ENCODE measurements at regions of chr16 and their contacts with region 1.

Region 1: DNA sequence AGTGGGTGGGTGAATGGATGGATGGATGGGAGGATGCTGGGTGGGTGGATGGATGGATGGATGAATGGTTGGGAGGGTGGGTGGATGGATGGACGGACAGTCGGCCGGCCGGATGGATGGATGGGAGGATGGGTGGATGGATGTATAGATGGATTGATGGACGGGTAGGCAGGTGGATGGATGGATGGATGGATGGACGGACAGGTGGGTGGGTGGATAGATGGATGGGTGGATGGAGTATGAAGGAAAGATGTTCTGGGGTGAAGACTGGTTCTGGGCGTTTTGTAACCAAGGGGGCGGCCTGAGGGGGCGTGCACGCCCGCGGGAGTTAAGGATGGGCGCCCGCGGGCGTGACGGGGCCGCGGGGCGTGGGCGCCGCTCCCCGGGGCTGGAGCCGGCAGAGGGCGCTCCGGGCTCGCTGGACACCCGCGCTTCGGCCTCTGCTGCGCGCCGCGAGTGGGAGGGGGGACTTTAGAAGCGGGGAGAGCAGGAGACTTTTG is at the start of gene NECAB2:
- DNase-seq: peak in 1 of 2 donors; percentile 56
- ATAC-seq: peak; percentile 70
- total RNA-seq, gene NECAB2: 0.24 to 1.0 TPM

Region 2: DNA sequence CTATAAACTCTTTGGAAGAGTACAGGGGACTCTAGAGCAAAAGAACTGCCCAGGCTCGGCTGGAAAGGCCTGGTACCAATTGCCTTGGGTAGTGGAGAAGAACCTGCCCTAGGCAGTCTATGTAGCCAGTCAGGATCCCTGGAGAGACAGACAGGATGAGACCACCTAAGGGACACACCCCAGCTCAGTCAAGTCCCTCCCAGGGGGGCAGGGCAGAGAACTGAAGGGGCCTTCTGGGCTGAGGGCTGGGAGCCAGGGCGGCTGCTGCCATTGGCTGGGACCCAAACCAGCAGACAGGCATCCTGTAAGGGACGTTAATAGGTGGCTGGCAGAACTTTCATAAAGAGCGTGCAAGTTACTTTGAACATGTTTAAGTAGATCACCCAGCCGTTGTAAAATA is 87.5 kb after region 1 on chr16:
- intact Hi-C with region 1: loop called (anchors 10 kb)
- DNase-seq: no peak
- ATAC-seq: no peak

Measured in left colon (tissue), 2 donors.